Dorsolateral prefrontal cortex (tissue), 120 donors: ENCODE measurements at regions of chr14 and their contacts with region 1.

Region 1: GRCh38 chr14:29759521-29760340 is 167.9 kb downstream of the PRKD1 start:
- DNase-seq: no peak
- H3K4me3 ChIP-seq: peak overlapping the region in 25 of 59 donors; percentile 0 to 46 (median 19)
- H3K27ac ChIP-seq: peak overlapping the region; percentile 3 to 94 (median 77)
- H3K27me3 ChIP-seq: no peaks in the 10 kb centered on the region
- CTCF ChIP-seq: peak in 2 of 56 donors; percentile 16

Region 2: GRCh38 chr14:29799464-29800095 is 39.8 kb after region 1 on chr14:
- intact Hi-C with region 1: loop called in 1 of 2 experiments (anchors 5 kb)
- DNase-seq: peak in 1 of 10 donors; percentile 28
- H3K4me3 ChIP-seq: peak overlapping the region in 45 of 59 donors; percentile 1 to 57 (median 31)
- H3K27ac ChIP-seq: peak overlapping the region in 15 of 59 donors; percentile 4 to 52 (median 21)
- H3K27me3 ChIP-seq: no peaks in the 10 kb centered on the region
- CTCF ChIP-seq: peak in 36 of 56 donors; percentile 6 to 60 (median 30)

Region 3: DNA sequence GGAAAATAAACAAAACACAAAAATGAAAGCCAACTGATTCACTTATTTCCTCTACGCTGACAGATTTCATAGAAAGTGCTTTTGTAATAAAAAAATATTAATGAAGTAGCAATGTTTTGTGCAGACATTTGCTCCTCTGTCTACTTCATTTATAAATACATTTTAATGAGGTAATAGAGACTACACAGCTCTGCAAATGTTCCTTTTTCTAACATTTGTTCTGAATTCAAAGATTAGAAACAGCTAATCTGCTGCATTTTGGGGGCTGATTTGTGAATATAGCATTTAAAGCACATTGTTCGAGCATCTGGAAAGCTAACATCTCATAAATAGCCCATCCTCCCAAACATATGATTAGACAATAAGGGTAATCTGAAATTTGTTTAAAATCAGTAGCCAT is 70.1 kb after region 1 on chr14:
- intact Hi-C with region 1: no loop called
- DNase-seq: no peak
- H3K4me3 ChIP-seq: no peak overlapping the region
- H3K27ac ChIP-seq: no peak overlapping the region
- H3K27me3 ChIP-seq: no peaks in the 10 kb centered on the region
- CTCF ChIP-seq: no peak